GM12878 (cell line): ENCODE measurements at regions of chr17 and their contacts with region 1.

Region 1: GRCh38 chr17:28763804-28764266 is 20.0 kb downstream of the TRAF4 start:
- DNase-seq: no peak
- ATAC-seq: peak; percentile 81
- H3K4me3 ChIP-seq: no peak overlapping the region
- H3K27ac ChIP-seq: peak overlapping the region; percentile 48
- H3K4me1 ChIP-seq: peaks cover 15% of the 10 kb centered on the region
- H3K27me3 ChIP-seq: no peaks in the 10 kb centered on the region
- CTCF ChIP-seq: peak; percentile 78 to 94 (median 82)
- EP300 ChIP-seq: no peak
- POLR2A ChIP-seq: no peak
- RAD21 ChIP-seq: peak; percentile 87

Region 2: DNA sequence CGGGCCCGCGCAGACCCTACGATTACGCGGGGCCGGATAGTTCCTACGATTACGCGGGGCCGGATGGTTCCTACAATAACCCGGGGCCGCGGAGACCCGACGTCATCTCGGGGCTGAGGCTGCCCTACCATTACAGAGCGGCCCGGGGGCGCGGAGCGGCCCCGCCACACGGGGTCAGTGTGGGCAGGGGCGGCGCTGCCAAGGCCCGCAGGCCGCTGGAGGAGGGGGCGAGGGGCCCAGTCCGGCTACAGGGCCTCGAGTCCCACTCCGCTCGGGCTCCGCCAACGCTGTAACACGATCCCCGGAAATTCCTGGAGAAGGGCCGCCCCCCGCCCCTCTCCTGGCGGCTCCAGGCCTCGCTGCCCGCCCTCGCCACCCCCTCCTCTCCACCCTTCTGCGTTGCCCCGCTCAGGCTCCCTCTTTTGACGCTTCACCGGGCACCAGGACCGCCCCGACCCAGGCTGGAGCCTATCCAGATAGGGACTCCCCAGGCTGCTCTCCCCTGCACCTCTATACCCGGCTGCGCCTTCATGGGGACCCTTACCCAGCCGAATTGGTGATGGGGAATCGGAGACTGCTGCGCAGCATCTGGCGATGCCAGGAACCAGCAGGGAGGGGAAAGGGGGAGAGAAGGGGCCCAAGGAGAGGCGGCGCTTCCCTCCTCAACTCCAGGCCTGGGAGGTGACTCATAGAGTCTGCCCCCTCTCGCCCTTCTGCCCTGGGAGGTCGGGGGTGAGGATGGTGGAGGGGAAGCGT is 46.1 kb before region 1 on chr17 and contains the start of gene RAB34:
- CTCF ChIA-PET with region 1: interaction called, 12 read pairs
- POLR2A ChIA-PET with region 1: interaction called, 4 read pairs
- RAD21 ChIA-PET with region 1: interaction called, 5 read pairs
- SMC1A ChIA-PET with region 1: interaction called, 4 read pairs
- in situ Hi-C with region 1: no loop called
- intact Hi-C with region 1: no loop called
- DNase-seq: no peak
- ATAC-seq: peak; percentile 31
- H3K4me3 ChIP-seq: peak within 1 kb of the TSS; percentile 55
- H3K27ac ChIP-seq: peak within 1 kb of the TSS; percentile 39
- H3K4me1 ChIP-seq: peaks cover 11% of the 10 kb centered on the region
- H3K27me3 ChIP-seq: no peaks in the 10 kb centered on the region
- CTCF ChIP-seq: peak in 2 of 3 experiments; percentile 15 to 32; a peak in 2 of 6 replicates
- EP300 ChIP-seq: no peak
- POLR2A ChIP-seq: peak; percentile 11; the same call in 1 of the 2 replicates
- RAD21 ChIP-seq: no peak
- polyA plus RNA-seq, gene RAB34: 14.4 to 32.6 TPM

Region 3: DNA sequence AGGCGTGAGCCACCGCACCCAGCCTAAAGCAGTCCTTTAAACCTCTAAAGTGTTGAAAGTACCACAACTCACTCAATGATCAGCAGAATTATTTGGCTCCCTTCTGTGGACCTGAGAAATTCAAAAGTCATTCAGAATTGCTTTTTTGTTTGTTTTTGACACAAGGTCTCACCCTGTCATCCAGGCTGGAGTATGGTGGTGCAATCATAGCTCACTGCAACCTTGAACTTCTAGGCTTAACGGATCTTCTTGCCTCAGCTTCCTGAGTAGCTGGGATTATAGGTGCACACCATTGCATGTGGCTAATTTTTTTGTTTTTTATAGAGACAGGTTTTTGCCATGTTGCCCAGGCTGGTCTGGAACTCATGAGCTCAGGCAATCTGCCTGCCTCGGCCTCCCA is 24.3 kb after region 1 on chr17:
- CTCF ChIA-PET with region 1: interaction called, 38 read pairs
- POLR2A ChIA-PET with region 1: interaction called, 3 read pairs
- RAD21 ChIA-PET with region 1: interaction called, 7 read pairs
- SMC1A ChIA-PET with region 1: interaction called, 4 read pairs
- in situ Hi-C with region 1: no loop called
- intact Hi-C with region 1: no loop called
- DNase-seq: no peak
- ATAC-seq: no peak
- H3K4me3 ChIP-seq: no peak overlapping the region
- H3K27ac ChIP-seq: no peak overlapping the region
- H3K4me1 ChIP-seq: no peaks in the 10 kb centered on the region
- H3K27me3 ChIP-seq: no peaks in the 10 kb centered on the region
- CTCF ChIP-seq: no peak
- EP300 ChIP-seq: no peak
- POLR2A ChIP-seq: no peak
- RAD21 ChIP-seq: no peak

Region 4: GRCh38 chr17:28842282-28843012 is 78.6 kb after region 1 on chr17 and contains the start of gene FAM222B:
- CTCF ChIA-PET with region 1: interaction called, 49 read pairs
- POLR2A ChIA-PET with region 1: interaction called, 3 read pairs
- RAD21 ChIA-PET with region 1: interaction called, 34 read pairs
- SMC1A ChIA-PET with region 1: interaction called, 20 read pairs
- in situ Hi-C with region 1: no loop called
- intact Hi-C with region 1: loop called (anchors 5 kb)
- DNase-seq: peak; percentile 51
- ATAC-seq: peak; percentile 99
- H3K4me3 ChIP-seq: peak within 1 kb of the TSS; percentile 98
- H3K27ac ChIP-seq: peak within 1 kb of the TSS; percentile 59
- H3K4me1 ChIP-seq: no peaks in the 10 kb centered on the region
- H3K27me3 ChIP-seq: no peaks in the 10 kb centered on the region
- CTCF ChIP-seq: 0 out of 6 replicates have a peak, but pooled peaks of 1 of the 3 experiments have one; percentile 1
- EP300 ChIP-seq: no peak
- POLR2A ChIP-seq: peak; percentile 87
- RAD21 ChIP-seq: no peak
- polyA plus RNA-seq, gene FAM222B: 2.8 to 2.9 TPM

Region 5: GRCh38 chr17:28878981-28879380 is 115.1 kb after region 1 on chr17:
- CTCF ChIA-PET with region 1: interaction called, 44 read pairs
- POLR2A ChIA-PET with region 1: interaction called, 3 read pairs
- RAD21 ChIA-PET with region 1: interaction called, 22 read pairs
- SMC1A ChIA-PET with region 1: interaction called, 19 read pairs
- in situ Hi-C with region 1: no loop called
- intact Hi-C with region 1: no loop called
- DNase-seq: no peak
- ATAC-seq: peak; percentile 92
- H3K4me3 ChIP-seq: no peak overlapping the region
- H3K27ac ChIP-seq: no peak overlapping the region
- H3K4me1 ChIP-seq: no peaks in the 10 kb centered on the region; the same call in 1 of the 2 replicates
- H3K27me3 ChIP-seq: no peaks in the 10 kb centered on the region
- CTCF ChIP-seq: peak; percentile 52 to 67 (median 55); a peak in 5 of 6 replicates
- EP300 ChIP-seq: no peak
- POLR2A ChIP-seq: no peak
- RAD21 ChIP-seq: peak; percentile 77

Region 6: GRCh38 chr17:28908640-28909167 is 144.9 kb after region 1 on chr17:
- CTCF ChIA-PET with region 1: interaction called, 175 read pairs
- POLR2A ChIA-PET with region 1: interaction called, 3 read pairs
- RAD21 ChIA-PET with region 1: interaction called, 23 read pairs
- SMC1A ChIA-PET with region 1: interaction called, 37 read pairs
- in situ Hi-C with region 1: no loop called
- intact Hi-C with region 1: no loop called
- DNase-seq: no peak
- ATAC-seq: no peak
- H3K4me3 ChIP-seq: no peak overlapping the region
- H3K27ac ChIP-seq: no peak overlapping the region
- H3K4me1 ChIP-seq: no peaks in the 10 kb centered on the region
- H3K27me3 ChIP-seq: no peaks in the 10 kb centered on the region
- CTCF ChIP-seq: no peak
- EP300 ChIP-seq: no peak
- POLR2A ChIP-seq: no peak
- RAD21 ChIP-seq: no peak

Region 7: GRCh38 chr17:28951991-28952975 is 188.4 kb after region 1 on chr17:
- CTCF ChIA-PET with region 1: interaction called, 92 read pairs
- POLR2A ChIA-PET with region 1: interaction called, 5 read pairs
- RAD21 ChIA-PET with region 1: interaction called, 21 read pairs
- SMC1A ChIA-PET with region 1: interaction called, 43 read pairs
- in situ Hi-C with region 1: no loop called
- intact Hi-C with region 1: no loop called
- DNase-seq: peak; percentile 100
- ATAC-seq: peak; percentile 82
- H3K4me3 ChIP-seq: peak overlapping the region; percentile 83
- H3K27ac ChIP-seq: peak overlapping the region; percentile 74
- H3K4me1 ChIP-seq: peaks cover 4% of the 10 kb centered on the region
- H3K27me3 ChIP-seq: no peaks in the 10 kb centered on the region
- CTCF ChIP-seq: no peak
- EP300 ChIP-seq: peak in 1 of 2 experiments; percentile 31; a peak in 1 of 4 replicates
- POLR2A ChIP-seq: peak; percentile 85
- RAD21 ChIP-seq: no peak

Region 8: GRCh38 chr17:29039764-29040598 is 276.1 kb after region 1 on chr17:
- CTCF ChIA-PET with region 1: no interaction called
- POLR2A ChIA-PET with region 1: no interaction called
- RAD21 ChIA-PET with region 1: no interaction called
- SMC1A ChIA-PET with region 1: no interaction called
- in situ Hi-C with region 1: no loop called
- intact Hi-C with region 1: no loop called
- DNase-seq: no peak
- ATAC-seq: no peak
- H3K4me3 ChIP-seq: no peak overlapping the region
- H3K27ac ChIP-seq: no peak overlapping the region
- H3K4me1 ChIP-seq: peaks cover 13% of the 10 kb centered on the region
- H3K27me3 ChIP-seq: no peaks in the 10 kb centered on the region; a peak in 1 of 4 replicates
- CTCF ChIP-seq: no peak
- EP300 ChIP-seq: no peak
- POLR2A ChIP-seq: no peak
- RAD21 ChIP-seq: no peak